ENCODE measurements at regions of chr20 and their contacts with region 1.

Region 1: GRCh38 chr20:41738604-41739206 is 120.5 kb upstream of the CHD6 start:
- DNase-seq: peak; percentile 44
- ATAC-seq: peak; percentile 53 to 81

Region 2: GRCh38 chr20:43187476-43188233 is 1449.0 kb after region 1 on chr20:
- intact Hi-C with region 1: loop called in 1 of 2 experiments (anchors 2 kb)
- DNase-seq: peak; percentile 75
- ATAC-seq: peak; percentile 44 to 62